Caco-2 (cell line): ENCODE measurements at regions of chr10 and their contacts with region 1.

Region 1: DNA sequence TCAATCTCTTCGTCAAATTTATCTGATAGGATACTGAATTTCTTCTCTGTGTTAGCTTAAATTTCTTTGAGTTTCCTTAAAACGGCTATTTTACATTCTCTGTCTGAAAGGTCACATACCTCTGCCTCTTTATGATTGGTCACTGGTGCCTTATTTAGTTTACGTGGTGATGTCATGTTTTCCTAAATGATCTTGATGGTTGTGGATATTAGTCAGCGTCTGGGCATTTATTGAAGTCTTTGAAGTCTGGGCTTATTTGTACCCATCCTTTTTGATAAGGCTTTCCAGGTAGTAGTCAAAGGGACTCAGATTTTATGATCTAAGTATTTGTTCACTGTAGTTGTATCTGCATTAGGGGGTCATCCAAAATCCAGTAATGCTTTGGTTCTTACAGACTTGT is 1407.5 kb upstream of the LRRTM3 start:
- DNase-seq: peak in 1 of 2 experiments; percentile 47
- H3K4me3 ChIP-seq: no peak overlapping the region
- H3K4me3 Mint-ChIP-seq: peak overlapping the region; percentile 51
- H3K27ac Mint-ChIP-seq: peak overlapping the region; percentile 54
- H3K4me1 ChIP-seq: peaks cover 16% of the 10 kb centered on the region
- H3K4me1 Mint-ChIP-seq: peaks cover 28% of the 10 kb centered on the region
- H3K27me3 ChIP-seq: no peaks in the 10 kb centered on the region
- H3K27me3 Mint-ChIP-seq: no peaks in the 10 kb centered on the region
- CTCF ChIP-seq: no peak

Region 2: DNA sequence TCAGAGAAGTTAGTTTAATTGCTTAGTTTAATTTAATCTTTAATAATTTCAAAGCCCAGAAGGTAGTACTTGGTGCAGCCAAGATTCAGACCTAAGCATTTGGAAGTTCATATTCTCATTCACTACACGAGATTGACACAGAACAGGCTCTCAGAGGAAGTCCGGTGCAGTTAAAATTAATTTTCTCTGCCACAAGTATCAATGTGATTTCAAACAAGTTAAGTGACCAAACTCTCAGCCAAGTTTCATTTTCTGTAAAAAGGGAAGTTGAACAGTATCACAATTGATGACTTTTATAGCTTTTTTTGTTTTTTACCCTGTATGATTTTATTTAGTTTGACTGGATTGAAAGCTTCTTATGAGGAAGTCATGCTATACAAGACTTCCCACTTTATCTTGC is 87.4 kb before region 1 on chr10:
- CTCF ChIA-PET with region 1: no interaction called
- POLR2A ChIA-PET with region 1: no interaction called
- intact Hi-C with region 1: no loop called
- DNase-seq: no peak
- H3K4me3 ChIP-seq: no peak overlapping the region
- H3K4me3 Mint-ChIP-seq: no peak overlapping the region
- H3K27ac Mint-ChIP-seq: no peak overlapping the region
- H3K4me1 ChIP-seq: no peaks in the 10 kb centered on the region
- H3K4me1 Mint-ChIP-seq: no peaks in the 10 kb centered on the region
- H3K27me3 ChIP-seq: no peaks in the 10 kb centered on the region
- H3K27me3 Mint-ChIP-seq: no peaks in the 10 kb centered on the region
- CTCF ChIP-seq: no peak

Region 3: DNA sequence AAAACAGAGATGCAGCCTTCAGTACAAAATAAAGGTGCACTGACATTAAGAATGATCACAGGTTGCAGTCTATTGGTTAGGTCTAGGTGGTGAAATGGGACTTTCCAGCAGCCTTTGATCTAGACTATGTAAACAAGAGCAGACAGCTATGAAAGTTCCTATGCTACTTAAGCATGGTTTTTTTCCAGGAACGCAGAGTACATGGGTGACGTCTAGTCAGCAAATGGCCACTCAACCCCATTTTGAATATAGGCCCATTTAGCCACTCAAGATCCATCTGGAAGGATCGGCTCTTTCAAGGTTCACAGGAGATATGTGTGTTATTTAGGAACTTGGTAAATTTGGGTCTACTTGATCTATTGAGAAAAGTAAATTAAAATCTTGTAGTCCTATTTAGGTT is 17.1 kb before region 1 on chr10:
- CTCF ChIA-PET with region 1: no interaction called
- POLR2A ChIA-PET with region 1: no interaction called
- intact Hi-C with region 1: loop called (anchors 1 kb)
- DNase-seq: peak; percentile 59 to 69
- H3K4me3 ChIP-seq: no peak overlapping the region
- H3K4me3 Mint-ChIP-seq: peak overlapping the region; percentile 32
- H3K27ac Mint-ChIP-seq: no peak overlapping the region
- H3K4me1 ChIP-seq: peaks cover 17% of the 10 kb centered on the region
- H3K4me1 Mint-ChIP-seq: peaks cover 20% of the 10 kb centered on the region
- H3K27me3 ChIP-seq: no peaks in the 10 kb centered on the region
- H3K27me3 Mint-ChIP-seq: no peaks in the 10 kb centered on the region
- CTCF ChIP-seq: no peak